ENCODE measurements at regions of chr16 and their contacts with region 1.

Region 1: DNA sequence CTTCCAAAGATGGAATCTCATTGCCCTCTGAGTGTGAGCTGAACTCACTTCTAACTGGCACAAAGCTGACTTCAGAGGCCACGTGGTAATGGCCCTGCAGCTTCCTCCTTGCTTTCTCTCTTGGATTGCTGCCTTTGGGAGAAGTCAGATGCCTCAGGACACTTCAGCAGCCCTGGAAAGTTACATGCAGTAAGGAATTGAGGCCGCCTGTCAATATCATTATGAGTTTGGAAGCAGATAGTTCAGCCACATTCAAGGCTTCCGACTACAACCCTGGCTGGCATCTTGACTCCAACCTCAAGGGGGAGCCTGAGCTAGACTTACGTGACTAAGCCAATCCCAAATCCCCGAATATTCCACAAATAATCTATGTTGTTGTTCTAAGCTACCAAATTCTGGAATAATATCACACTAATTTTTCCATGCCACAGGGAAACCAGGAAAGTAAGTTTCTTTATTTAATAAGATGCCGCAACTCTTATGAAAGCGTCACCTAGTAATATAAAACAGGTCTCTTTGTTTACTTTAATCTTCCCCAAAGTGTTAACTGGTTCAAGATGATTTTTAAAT is 13.6 kb downstream of the CEP20 start:
- DNase-seq: peak; percentile 59 to 82
- H3K4me3 ChIP-seq: no peak overlapping the region
- H3K27ac ChIP-seq: peak overlapping the region in 3 of 5 donors; percentile 6 to 74 (median 21)
- H3K4me1 ChIP-seq: peaks cover 0 to 20% (median 11%) of the 10 kb centered on the region in 4 donors
- H3K27me3 ChIP-seq: no peaks in the 10 kb centered on the region
- CTCF ChIP-seq: peak in 4 of 7 experiments; percentile 58 to 73 (median 64)
- EP300 ChIP-seq: no peak
- POLR2A ChIP-seq: no peak

Region 2: DNA sequence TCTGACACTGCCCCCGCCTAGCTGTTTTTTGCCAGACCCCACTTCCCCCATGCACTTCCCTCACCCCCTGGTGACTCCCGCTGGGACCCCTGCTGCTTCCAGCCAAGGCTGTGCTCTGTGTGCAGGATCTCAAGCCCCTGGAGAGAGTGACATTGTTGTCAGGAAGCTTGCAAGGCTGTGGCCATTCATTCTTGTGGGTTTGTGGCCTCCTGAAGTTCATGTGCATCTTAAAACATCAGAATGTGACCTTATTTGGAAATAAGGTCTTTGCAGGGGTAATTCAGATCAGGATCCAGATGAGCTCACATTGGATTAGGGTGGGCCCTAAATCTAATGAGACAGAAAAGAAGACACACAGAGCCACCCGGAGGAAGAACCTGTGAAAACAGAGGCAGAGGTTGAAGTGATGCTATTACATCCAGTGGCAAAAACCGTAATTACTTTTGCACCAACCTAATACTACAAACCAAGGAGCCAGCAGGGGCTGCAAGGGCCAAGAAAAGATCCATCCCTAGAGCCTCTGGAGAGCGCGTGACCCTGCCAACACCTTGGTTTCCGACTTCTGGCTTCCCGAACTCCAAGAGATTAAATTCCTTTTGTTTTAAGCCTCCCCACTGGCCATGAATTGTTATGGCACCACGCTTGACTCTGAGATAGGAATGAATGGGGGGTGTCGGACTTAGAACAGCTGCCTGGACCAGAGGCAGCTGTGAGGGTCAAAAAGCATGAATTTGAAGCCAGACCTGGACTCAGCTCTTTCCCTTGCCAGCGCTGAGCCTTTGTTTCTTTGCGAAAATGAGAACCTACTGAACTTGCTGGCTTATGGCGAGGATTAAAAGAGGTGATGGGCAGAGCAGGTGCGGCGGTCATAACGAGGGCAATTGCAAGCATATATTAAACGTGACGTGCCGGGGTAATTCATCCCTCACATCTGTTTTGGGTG is 365.0 kb before region 1 on chr16:
- intact Hi-C with region 1: no loop called
- DNase-seq: no peak
- H3K4me3 ChIP-seq: no peak overlapping the region
- H3K27ac ChIP-seq: no peak overlapping the region
- H3K4me1 ChIP-seq: peaks cover 8 to 14% (median 10%) of the 10 kb centered on the region in 4 donors
- H3K27me3 ChIP-seq: no peaks in the 10 kb centered on the region
- CTCF ChIP-seq: no peak
- EP300 ChIP-seq: no peak
- POLR2A ChIP-seq: no peak

Region 3: GRCh38 chr16:15961060-15961511 is 86.3 kb after region 1 on chr16:
- intact Hi-C with region 1: no loop called
- DNase-seq: peak in 1 of 2 donors; percentile 64
- H3K4me3 ChIP-seq: no peak overlapping the region
- H3K27ac ChIP-seq: peak overlapping the region; percentile 11 to 45 (median 28)
- H3K4me1 ChIP-seq: peaks cover 5 to 91% (median 38%) of the 10 kb centered on the region in 4 donors
- H3K27me3 ChIP-seq: no peaks in the 10 kb centered on the region
- CTCF ChIP-seq: no peak
- EP300 ChIP-seq: no peak
- POLR2A ChIP-seq: no peak

Region 4: GRCh38 chr16:16120382-16121184 is 245.8 kb after region 1 on chr16:
- intact Hi-C with region 1: loop called (anchors 5 kb)
- DNase-seq: peak; percentile 56 to 78
- H3K4me3 ChIP-seq: no peak overlapping the region
- H3K27ac ChIP-seq: peak overlapping the region; percentile 30 to 73 (median 67)
- H3K4me1 ChIP-seq: peaks cover 0 to 17% (median 10%) of the 10 kb centered on the region in 4 donors
- H3K27me3 ChIP-seq: no peaks in the 10 kb centered on the region
- CTCF ChIP-seq: no peak
- EP300 ChIP-seq: no peak
- POLR2A ChIP-seq: no peak

Measured in stomach (tissue), 19 donors.